Activated CD4-positive, alpha-beta T cell treated with anti-CD3 and anti-CD28 coated beads, Interleukin-2, amount 10 ng/mL, durations not matched to agents 7 days and 5 days (primary cell): ENCODE measurements at regions of chr16 and their contacts with region 1.

Region 1: GRCh38 chr16:30902029-30902972 is 5.9 kb downstream of the CTF1 start:
- DNase-seq: peak; percentile 60
- H3K4me3 Mint-ChIP-seq: peak overlapping the region; percentile 93
- H3K27ac Mint-ChIP-seq: peak overlapping the region; percentile 100
- H3K4me1 Mint-ChIP-seq: peaks cover 53% of the 10 kb centered on the region
- H3K27me3 Mint-ChIP-seq: no peaks in the 10 kb centered on the region

Region 2: DNA sequence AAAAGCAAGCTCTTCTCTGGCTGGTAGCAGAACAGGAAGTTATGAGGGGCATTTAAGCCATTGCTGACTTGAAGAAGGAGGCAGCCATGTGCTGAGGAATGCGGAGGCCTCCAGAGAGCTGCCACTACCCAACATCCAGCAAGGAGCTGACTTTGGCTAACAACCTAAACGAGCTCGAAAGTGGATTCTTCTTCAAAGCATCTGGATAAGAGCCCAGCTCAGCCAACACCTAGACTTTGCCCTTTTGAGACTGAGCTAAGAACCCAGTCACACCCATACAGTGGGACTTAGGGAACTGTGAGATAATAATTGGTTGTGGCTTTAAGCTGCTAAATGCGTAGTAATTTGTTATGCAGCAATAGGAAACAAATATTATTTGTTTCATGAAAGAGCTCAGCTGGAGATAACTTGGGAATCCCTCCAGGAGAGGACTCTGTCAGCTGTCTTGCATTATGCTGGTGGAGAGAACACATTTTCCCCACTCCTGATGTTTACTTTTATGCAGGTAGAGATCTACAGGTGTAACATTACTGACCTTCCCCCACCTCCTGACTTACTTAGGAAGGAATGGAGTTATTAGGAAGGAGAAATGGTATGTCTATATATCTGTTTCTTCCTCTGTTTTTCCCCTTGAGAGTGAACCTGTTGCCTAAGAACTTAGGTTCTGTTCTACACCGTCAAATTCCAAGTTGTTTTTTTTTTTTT is 62.6 kb before region 1 on chr16:
- CTCF ChIA-PET with region 1: interaction called, 46 read pairs
- POLR2A ChIA-PET with region 1: interaction called, 12 read pairs
- DNase-seq: no peak
- H3K4me3 Mint-ChIP-seq: no peak overlapping the region
- H3K27ac Mint-ChIP-seq: no peak overlapping the region
- H3K4me1 Mint-ChIP-seq: peaks cover 2% of the 10 kb centered on the region
- H3K27me3 Mint-ChIP-seq: no peaks in the 10 kb centered on the region

Region 3: GRCh38 chr16:30844671-30845449 is 57.4 kb before region 1 on chr16:
- CTCF ChIA-PET with region 1: interaction called, 46 read pairs
- POLR2A ChIA-PET with region 1: interaction called, 12 read pairs
- DNase-seq: peak; percentile 95
- H3K4me3 Mint-ChIP-seq: peak overlapping the region; percentile 17
- H3K27ac Mint-ChIP-seq: peak overlapping the region; percentile 88
- H3K4me1 Mint-ChIP-seq: peaks cover 10% of the 10 kb centered on the region
- H3K27me3 Mint-ChIP-seq: no peaks in the 10 kb centered on the region

Region 4: GRCh38 chr16:30853758-30854157 is 48.5 kb before region 1 on chr16:
- CTCF ChIA-PET with region 1: interaction called, 10 read pairs
- POLR2A ChIA-PET with region 1: no interaction called
- DNase-seq: no peak
- H3K4me3 Mint-ChIP-seq: no peak overlapping the region
- H3K27ac Mint-ChIP-seq: no peak overlapping the region
- H3K4me1 Mint-ChIP-seq: no peaks in the 10 kb centered on the region
- H3K27me3 Mint-ChIP-seq: no peaks in the 10 kb centered on the region

Region 5: DNA sequence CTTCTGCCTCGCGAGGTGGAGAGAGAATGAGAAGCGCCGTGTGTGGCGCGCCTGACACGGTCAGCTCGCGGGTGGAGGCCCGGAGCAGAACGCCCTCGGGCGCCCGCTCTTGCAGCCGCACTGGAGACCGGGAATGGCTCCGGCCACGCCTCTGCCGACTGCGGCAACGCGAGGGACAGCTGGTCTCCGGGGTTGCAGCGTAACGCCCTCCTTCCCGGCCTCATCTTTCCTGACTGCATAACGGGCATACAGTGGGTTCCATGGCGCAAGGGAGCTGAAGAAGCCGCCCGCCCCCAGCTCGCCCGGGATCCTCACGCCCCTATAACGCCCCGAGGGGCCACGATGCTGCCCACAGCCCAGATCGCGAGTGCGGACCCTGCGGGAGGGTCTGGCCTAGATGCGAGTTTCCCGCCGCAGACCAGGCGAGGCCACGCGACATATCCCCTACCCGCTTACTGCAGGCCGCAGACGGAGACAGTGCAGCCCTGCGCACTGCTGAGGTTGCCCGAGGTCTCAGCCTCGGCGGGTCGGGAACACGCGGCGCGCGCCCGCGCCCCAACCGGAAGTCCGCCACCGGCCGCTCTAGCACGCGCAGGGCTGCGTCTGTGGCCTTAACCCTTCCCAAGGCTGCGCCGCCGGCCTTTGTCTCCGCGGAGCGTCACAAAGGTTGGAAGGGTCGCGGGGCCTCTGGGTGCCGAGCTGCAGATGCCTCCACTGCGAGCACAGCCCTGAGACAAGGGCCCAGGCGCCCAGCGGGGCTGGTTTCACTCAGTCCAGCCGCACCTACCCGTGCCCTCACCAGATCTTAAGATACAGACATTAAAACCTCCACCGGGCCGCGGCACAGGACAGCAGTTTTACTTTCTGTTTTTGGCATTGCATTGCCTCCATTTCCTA is 27.2 kb before region 1 on chr16:
- CTCF ChIA-PET with region 1: interaction called, 9 read pairs
- POLR2A ChIA-PET with region 1: interaction called, 11 read pairs
- DNase-seq: peak; percentile 87
- H3K4me3 Mint-ChIP-seq: peak overlapping the region; percentile 94
- H3K27ac Mint-ChIP-seq: peak overlapping the region; percentile 98
- H3K4me1 Mint-ChIP-seq: peaks cover 30% of the 10 kb centered on the region
- H3K27me3 Mint-ChIP-seq: no peaks in the 10 kb centered on the region

Region 6: GRCh38 chr16:30914830-30915229 is 12.5 kb after region 1 on chr16:
- CTCF ChIA-PET with region 1: interaction called, 14 read pairs
- POLR2A ChIA-PET with region 1: interaction called, 3 read pairs
- DNase-seq: no peak
- H3K4me3 Mint-ChIP-seq: no peak overlapping the region
- H3K27ac Mint-ChIP-seq: no peak overlapping the region
- H3K4me1 Mint-ChIP-seq: no peaks in the 10 kb centered on the region
- H3K27me3 Mint-ChIP-seq: no peaks in the 10 kb centered on the region

Region 7: GRCh38 chr16:30941600-30942425 is 39.5 kb after region 1 on chr16:
- CTCF ChIA-PET with region 1: interaction called, 11 read pairs
- POLR2A ChIA-PET with region 1: no interaction called
- DNase-seq: peak; percentile 74
- H3K4me3 Mint-ChIP-seq: peak overlapping the region; percentile 51
- H3K27ac Mint-ChIP-seq: peak overlapping the region; percentile 72
- H3K4me1 Mint-ChIP-seq: peaks cover 34% of the 10 kb centered on the region
- H3K27me3 Mint-ChIP-seq: no peaks in the 10 kb centered on the region